Activated CD8-positive, alpha-beta memory T cell treated with anti-CD3 and anti-CD28 coated beads, Interleukin-2, amount 10 ng/mL, durations not matched to agents 7 days and 5 days (primary cell): ENCODE measurements at regions of chr6 and their contacts with region 1.

Region 1: GRCh38 chr6:125779924-125780539 is 10.7 kb upstream of the NCOA7 start:
- DNase-seq: peak; percentile 87
- ATAC-seq: peak; percentile 81
- H3K4me3 Mint-ChIP-seq: no peak overlapping the region
- H3K27ac Mint-ChIP-seq: no peak overlapping the region
- H3K4me1 Mint-ChIP-seq: peaks cover 17% of the 10 kb centered on the region
- H3K27me3 Mint-ChIP-seq: peaks cover 20% of the 10 kb centered on the region

Region 2: GRCh38 chr6:125631165-125631564 is 148.9 kb before region 1 on chr6:
- CTCF ChIA-PET with region 1: no interaction called
- DNase-seq: no peak
- ATAC-seq: no peak
- H3K4me3 Mint-ChIP-seq: no peak overlapping the region
- H3K27ac Mint-ChIP-seq: no peak overlapping the region
- H3K4me1 Mint-ChIP-seq: no peaks in the 10 kb centered on the region
- H3K27me3 Mint-ChIP-seq: peaks cover 14% of the 10 kb centered on the region

Region 3: GRCh38 chr6:125974214-125974866 is 194.3 kb after region 1 on chr6:
- CTCF ChIA-PET with region 1: interaction called, 12 read pairs
- DNase-seq: no peak
- ATAC-seq: peak; percentile 69
- H3K4me3 Mint-ChIP-seq: no peak overlapping the region
- H3K27ac Mint-ChIP-seq: peak overlapping the region; percentile 8
- H3K4me1 Mint-ChIP-seq: peaks cover 5% of the 10 kb centered on the region
- H3K27me3 Mint-ChIP-seq: no peaks in the 10 kb centered on the region

Region 4: DNA sequence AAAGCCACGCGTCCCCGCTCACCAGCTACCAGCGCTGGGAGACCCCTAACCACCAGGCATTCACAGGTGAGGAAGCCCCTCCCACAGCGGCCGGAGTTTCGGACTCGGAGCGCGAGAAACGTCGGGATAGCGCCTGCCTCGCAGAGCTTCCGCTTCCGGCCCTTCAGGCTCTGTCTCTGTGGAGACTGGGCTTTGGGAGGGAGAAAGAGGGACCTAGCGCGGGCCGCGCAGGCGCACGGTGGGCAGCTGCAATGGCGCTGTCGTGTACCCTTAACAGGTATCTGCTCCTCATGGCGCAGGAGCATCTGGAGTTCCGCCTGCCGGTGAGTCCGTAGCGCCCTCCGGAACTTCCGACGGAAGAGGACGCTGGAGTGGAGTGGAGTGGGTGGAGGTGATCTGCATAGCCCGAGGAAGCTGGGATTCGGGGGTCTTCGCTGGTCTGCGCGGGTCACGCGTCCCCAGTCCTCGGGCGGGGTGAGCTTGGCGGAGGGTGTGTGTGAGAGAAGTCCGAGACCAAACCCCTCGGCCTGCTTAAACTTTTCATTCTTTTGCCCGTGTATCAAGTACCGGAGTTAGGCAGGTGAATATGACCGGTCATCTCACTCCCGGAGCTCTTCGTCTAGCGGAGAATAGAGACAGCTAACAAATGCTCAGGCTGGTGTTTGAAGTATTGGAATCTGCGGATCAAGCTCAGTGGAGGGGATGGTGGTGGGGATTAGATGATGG is 206.4 kb after region 1 on chr6 and contains the start of gene TRMT11:
- CTCF ChIA-PET with region 1: interaction called, 11 read pairs
- DNase-seq: peak; percentile 87
- ATAC-seq: peak; percentile 99
- H3K4me3 Mint-ChIP-seq: peak within 1 kb of the TSS; percentile 38
- H3K27ac Mint-ChIP-seq: no peak within 1 kb of the TSS
- H3K4me1 Mint-ChIP-seq: peaks cover 18% of the 10 kb centered on the region
- H3K27me3 Mint-ChIP-seq: no peaks in the 10 kb centered on the region
- total RNA-seq, gene TRMT11: 20.6 to 26.4 TPM